Activated naive CD4-positive, alpha-beta T cell treated with anti-CD3 and anti-CD28 coated beads for 36 hours (primary cell): ENCODE measurements at regions of chr15 and their contacts with region 1.

Region 1: GRCh38 chr15:44195151-44195740 is at the start of gene FRMD5:
- DNase-seq: peak; percentile 94
- H3K4me3 Mint-ChIP-seq: peak within 1 kb of the TSS; percentile 84
- H3K27ac Mint-ChIP-seq: no peak within 1 kb of the TSS
- H3K4me1 Mint-ChIP-seq: peaks cover 18% of the 10 kb centered on the region
- H3K27me3 Mint-ChIP-seq: peaks cover 28% of the 10 kb centered on the region
- total RNA-seq, gene FRMD5: 0.37 to 0.50 TPM

Region 2: GRCh38 chr15:43492673-43493601 is 702.3 kb before region 1 on chr15 and contains the start of gene TP53BP1:
- CTCF ChIA-PET with region 1: no interaction called
- intact Hi-C with region 1: loop called (anchors 10 kb)
- DNase-seq: peak; percentile 97
- H3K4me3 Mint-ChIP-seq: peak within 1 kb of the TSS; percentile 96
- H3K27ac Mint-ChIP-seq: peak within 1 kb of the TSS; percentile 92
- H3K4me1 Mint-ChIP-seq: peaks cover 27% of the 10 kb centered on the region
- H3K27me3 Mint-ChIP-seq: no peaks in the 10 kb centered on the region
- total RNA-seq, gene TP53BP1: 18.9 to 22.3 TPM

Region 3: GRCh38 chr15:44215594-44215993 is 20.3 kb after region 1 on chr15:
- CTCF ChIA-PET with region 1: interaction called, 5 read pairs
- intact Hi-C with region 1: loop called (anchors 1 kb)
- DNase-seq: no peak
- H3K4me3 Mint-ChIP-seq: no peak overlapping the region
- H3K27ac Mint-ChIP-seq: no peak overlapping the region
- H3K4me1 Mint-ChIP-seq: peaks cover 2% of the 10 kb centered on the region
- H3K27me3 Mint-ChIP-seq: peaks cover 15% of the 10 kb centered on the region

Region 4: GRCh38 chr15:44286814-44287452 is 91.7 kb after region 1 on chr15:
- CTCF ChIA-PET with region 1: no interaction called
- intact Hi-C with region 1: loop called (anchors 1 kb)
- DNase-seq: no peak
- H3K4me3 Mint-ChIP-seq: peak overlapping the region; percentile 88
- H3K27ac Mint-ChIP-seq: peak overlapping the region; percentile 94
- H3K4me1 Mint-ChIP-seq: peaks cover 36% of the 10 kb centered on the region
- H3K27me3 Mint-ChIP-seq: no peaks in the 10 kb centered on the region

Region 5: DNA sequence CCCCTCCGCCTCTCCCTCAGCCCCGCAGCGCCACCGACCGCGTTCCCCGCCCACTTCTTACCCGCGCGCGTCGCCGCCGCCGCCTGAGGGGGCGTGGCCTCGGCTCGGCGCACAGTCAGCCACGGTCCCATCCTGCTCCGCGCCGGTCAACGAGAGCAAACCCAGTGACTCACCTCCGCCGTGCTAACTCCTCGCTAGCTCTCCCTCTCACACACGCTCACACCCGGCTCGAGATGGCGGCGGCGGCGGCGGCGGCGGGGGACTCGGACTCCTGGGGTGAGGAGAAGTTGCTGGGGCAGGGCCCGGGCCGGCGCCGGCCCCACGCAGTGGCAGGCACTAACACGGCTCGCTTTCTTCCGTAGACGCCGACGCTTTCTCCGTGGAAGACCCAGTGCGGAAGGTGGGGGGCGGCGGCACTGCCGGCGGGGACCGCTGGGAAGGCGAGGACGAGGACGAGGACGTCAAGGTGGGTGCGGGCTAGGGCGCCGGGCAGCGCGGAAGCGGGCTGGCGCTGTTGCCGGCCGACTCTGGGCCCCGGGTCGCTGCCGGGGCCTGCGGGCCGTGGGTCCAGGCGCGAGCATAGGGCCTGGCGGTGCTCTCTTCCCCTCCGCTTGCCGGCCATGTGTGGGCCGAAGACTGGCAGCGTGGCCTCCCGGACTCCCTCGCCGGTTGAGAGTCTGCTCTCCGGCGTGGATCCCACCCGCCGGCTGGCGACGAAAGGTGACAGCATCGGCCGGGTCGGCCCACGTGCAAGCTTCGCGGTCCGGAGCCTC is 341.9 kb after region 1 on chr15 and contains the start of gene EIF3J:
- CTCF ChIA-PET with region 1: no interaction called
- intact Hi-C with region 1: loop called (anchors 1 kb)
- DNase-seq: peak; percentile 96
- H3K4me3 Mint-ChIP-seq: peak within 1 kb of the TSS; percentile 84
- H3K27ac Mint-ChIP-seq: peak within 1 kb of the TSS; percentile 95
- H3K4me1 Mint-ChIP-seq: peaks cover 48% of the 10 kb centered on the region
- H3K27me3 Mint-ChIP-seq: no peaks in the 10 kb centered on the region
- total RNA-seq, gene EIF3J: 75.8 to 77.9 TPM